ENCODE measurements at regions of chr9 and their contacts with region 1.

Region 1: DNA sequence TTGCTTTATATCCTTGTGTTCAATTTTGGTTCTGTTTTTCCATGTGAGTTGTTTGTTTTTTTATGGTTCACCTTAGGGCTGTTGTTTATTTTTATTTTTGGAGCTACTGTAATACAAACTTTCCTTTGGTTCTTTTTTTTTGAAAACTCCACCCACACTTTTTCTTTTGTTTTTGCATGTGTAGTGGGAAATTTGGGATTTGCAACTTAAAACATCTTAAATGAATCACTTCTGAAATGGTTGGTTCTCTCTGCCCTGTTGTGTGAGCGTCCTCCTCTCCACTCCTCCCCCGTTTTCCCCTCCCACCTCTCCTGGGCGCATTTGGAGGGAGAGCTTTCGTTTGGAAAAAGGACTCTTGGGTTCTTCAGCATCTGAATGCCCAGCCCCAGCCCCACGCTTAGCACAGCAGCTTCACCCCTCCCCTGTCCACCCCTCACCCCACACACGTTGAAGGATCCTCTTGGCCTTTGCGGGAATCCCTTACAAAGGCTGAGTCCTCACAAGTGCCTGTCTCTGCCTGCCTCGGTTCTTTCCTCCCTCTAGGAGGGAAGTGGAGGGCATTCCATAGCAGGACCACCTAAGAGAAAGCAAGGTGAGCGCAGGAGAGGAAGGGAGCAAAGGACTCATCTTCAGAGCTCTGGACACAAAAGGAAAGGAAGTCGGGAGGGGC is 67.2 kb downstream of the DMRT1 start:
- DNase-seq: no peak
- H3K4me3 ChIP-seq: no peak overlapping the region
- H3K27ac ChIP-seq: no peak overlapping the region
- H3K4me1 ChIP-seq: no peaks in the 10 kb centered on the region
- H3K27me3 ChIP-seq: peaks cover 17% of the 10 kb centered on the region
- CTCF ChIP-seq: no peak
- POLR2A ChIP-seq: no peak

Region 2: DNA sequence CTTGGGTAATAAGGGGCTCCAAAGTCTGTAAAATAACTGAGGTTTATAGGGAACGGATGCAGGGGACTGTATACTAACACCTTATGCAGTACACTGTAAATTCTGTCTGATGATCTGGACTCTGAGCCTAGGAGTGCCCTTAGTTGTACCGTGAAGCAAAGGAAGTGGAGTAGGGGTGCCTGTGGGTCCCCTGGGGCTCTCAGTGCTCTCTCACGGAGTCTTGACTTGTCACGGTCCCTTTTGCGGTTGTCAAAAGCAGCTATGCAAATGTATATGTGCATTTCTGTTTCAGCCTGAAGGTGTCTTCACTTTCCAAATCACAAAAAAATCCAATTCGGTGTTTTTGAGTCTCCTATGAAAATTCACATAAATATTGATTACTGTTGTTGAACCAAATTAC is 49.4 kb before region 1 on chr9:
- intact Hi-C with region 1: no loop called
- DNase-seq: no peak
- H3K4me3 ChIP-seq: no peak overlapping the region
- H3K27ac ChIP-seq: no peak overlapping the region
- H3K4me1 ChIP-seq: no peaks in the 10 kb centered on the region
- H3K27me3 ChIP-seq: no peaks in the 10 kb centered on the region
- CTCF ChIP-seq: no peak
- POLR2A ChIP-seq: no peak

Region 3: GRCh38 chr9:1001838-1002237 is 93.2 kb after region 1 on chr9:
- intact Hi-C with region 1: loop called in 1 of 2 experiments (anchors 5 kb)
- DNase-seq: no peak
- H3K4me3 ChIP-seq: no peak overlapping the region
- H3K27ac ChIP-seq: no peak overlapping the region
- H3K4me1 ChIP-seq: peaks cover 0 to 2% of the 10 kb centered on the region in 2 donors
- H3K27me3 ChIP-seq: peaks cover 5% of the 10 kb centered on the region
- CTCF ChIP-seq: no peak
- POLR2A ChIP-seq: no peak

Region 4: GRCh38 chr9:1018121-1018701 is 109.5 kb after region 1 on chr9:
- intact Hi-C with region 1: no loop called
- DNase-seq: no peak
- H3K4me3 ChIP-seq: no peak overlapping the region
- H3K27ac ChIP-seq: no peak overlapping the region
- H3K4me1 ChIP-seq: no peaks in the 10 kb centered on the region
- H3K27me3 ChIP-seq: peaks cover 15% of the 10 kb centered on the region
- CTCF ChIP-seq: no peak
- POLR2A ChIP-seq: no peak

Measured in adrenal gland (tissue), 19 donors.